Activated CD4-positive, alpha-beta memory T cell treated with anti-CD3 and anti-CD28 coated beads for 36 hours (primary cell): ENCODE measurements at regions of chr2 and their contacts with region 1.

Region 1: DNA sequence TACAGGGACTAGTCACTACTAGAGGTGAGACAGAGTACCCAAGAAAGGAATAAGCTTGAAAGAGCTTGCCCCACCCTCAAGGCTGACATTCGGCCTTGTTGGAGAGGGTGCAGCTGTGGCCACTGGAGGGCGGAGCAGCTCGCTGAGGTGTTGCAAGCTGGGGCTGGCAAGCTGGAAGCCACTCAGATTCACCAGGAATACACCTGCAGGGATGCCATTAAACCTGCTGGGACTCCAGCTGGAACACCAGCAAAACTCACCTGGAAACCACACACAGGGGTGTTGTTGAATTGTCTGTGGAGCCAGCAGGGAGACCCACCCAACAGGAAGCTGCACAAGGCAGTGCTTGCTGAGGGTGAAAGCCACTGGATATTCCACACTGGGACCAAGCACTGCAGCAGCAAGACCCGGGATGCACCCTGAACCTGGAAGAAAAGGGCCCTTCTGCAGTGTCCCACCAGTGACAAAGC is 26.1 kb downstream of the KCTD18 start:
- DNase-seq: peak; percentile 66
- H3K4me3 Mint-ChIP-seq: no peak overlapping the region
- H3K27ac Mint-ChIP-seq: no peak overlapping the region
- H3K4me1 Mint-ChIP-seq: peaks cover 18% of the 10 kb centered on the region
- H3K27me3 Mint-ChIP-seq: no peaks in the 10 kb centered on the region

Region 2: DNA sequence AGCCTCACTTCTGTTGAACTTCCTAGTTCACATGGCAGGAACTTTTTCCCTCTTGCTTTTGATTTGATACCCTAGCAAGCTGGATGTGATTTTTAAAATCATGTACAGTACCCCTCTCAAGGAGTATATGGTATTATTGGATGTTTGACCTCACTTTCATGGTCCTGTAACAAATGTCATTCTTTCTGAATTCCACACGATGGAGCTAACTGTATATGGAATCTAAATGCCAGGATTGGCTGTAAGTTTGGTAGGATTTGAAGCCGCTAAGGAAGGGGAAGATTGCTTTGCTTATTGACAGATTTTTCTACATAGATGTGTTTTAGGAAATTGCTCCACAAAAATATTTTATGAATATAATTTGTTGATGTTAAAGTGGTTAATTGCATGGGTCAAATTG is 510.1 kb before region 1 on chr2:
- CTCF ChIA-PET with region 1: interaction called, 11 read pairs
- POLR2A ChIA-PET with region 1: no interaction called
- intact Hi-C with region 1: no loop called
- DNase-seq: no peak
- H3K4me3 Mint-ChIP-seq: no peak overlapping the region
- H3K27ac Mint-ChIP-seq: no peak overlapping the region
- H3K4me1 Mint-ChIP-seq: peaks cover 15% of the 10 kb centered on the region
- H3K27me3 Mint-ChIP-seq: no peaks in the 10 kb centered on the region

Region 3: GRCh38 chr2:199985625-199986207 is 498.0 kb before region 1 on chr2:
- CTCF ChIA-PET with region 1: interaction called, 49 read pairs
- POLR2A ChIA-PET with region 1: interaction called, 3 read pairs
- intact Hi-C with region 1: loop called (anchors 1 kb)
- DNase-seq: peak; percentile 73
- H3K4me3 Mint-ChIP-seq: no peak overlapping the region
- H3K27ac Mint-ChIP-seq: no peak overlapping the region
- H3K4me1 Mint-ChIP-seq: peaks cover 4% of the 10 kb centered on the region
- H3K27me3 Mint-ChIP-seq: no peaks in the 10 kb centered on the region

Region 4: GRCh38 chr2:200199576-200200263 is 284.0 kb before region 1 on chr2:
- CTCF ChIA-PET with region 1: no interaction called
- POLR2A ChIA-PET with region 1: no interaction called
- intact Hi-C with region 1: loop called (anchors 10 kb)
- DNase-seq: peak; percentile 12
- H3K4me3 Mint-ChIP-seq: no peak overlapping the region
- H3K27ac Mint-ChIP-seq: no peak overlapping the region
- H3K4me1 Mint-ChIP-seq: no peaks in the 10 kb centered on the region
- H3K27me3 Mint-ChIP-seq: peaks cover 4% of the 10 kb centered on the region

Region 5: DNA sequence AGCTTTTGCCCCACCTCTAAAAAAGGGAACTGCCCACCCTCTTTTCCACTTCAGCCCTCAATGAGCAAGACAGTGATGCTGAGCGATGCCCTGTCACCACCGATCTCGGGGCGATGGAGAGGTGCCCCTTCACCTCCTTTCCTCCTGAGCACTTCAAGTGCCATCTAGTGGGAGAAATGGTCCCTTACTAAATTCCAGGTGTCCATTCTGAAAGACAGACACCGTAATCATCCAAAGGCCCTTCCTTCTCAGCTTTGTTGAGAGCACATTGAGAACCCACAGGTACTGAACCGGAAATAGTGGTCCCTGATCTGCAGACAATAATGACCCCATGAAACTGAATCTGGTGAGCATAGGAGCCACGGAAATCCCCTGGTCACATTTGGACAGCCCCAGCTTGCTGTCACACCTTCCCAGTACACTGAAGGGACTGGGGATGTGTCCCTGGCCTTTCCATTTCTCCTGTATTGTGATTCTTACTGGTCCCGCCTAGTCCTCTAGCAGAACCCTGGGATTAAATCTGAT is 12.4 kb before region 1 on chr2:
- CTCF ChIA-PET with region 1: interaction called, 37 read pairs
- POLR2A ChIA-PET with region 1: interaction called, 3 read pairs
- intact Hi-C with region 1: no loop called
- DNase-seq: peak; percentile 63
- H3K4me3 Mint-ChIP-seq: no peak overlapping the region
- H3K27ac Mint-ChIP-seq: no peak overlapping the region
- H3K4me1 Mint-ChIP-seq: peaks cover 35% of the 10 kb centered on the region
- H3K27me3 Mint-ChIP-seq: no peaks in the 10 kb centered on the region

Region 6: GRCh38 chr2:200498402-200499162 is 14.8 kb after region 1 on chr2:
- CTCF ChIA-PET with region 1: interaction called, 25 read pairs
- POLR2A ChIA-PET with region 1: no interaction called
- intact Hi-C with region 1: no loop called
- DNase-seq: no peak
- H3K4me3 Mint-ChIP-seq: no peak overlapping the region
- H3K27ac Mint-ChIP-seq: no peak overlapping the region
- H3K4me1 Mint-ChIP-seq: peaks cover 5% of the 10 kb centered on the region
- H3K27me3 Mint-ChIP-seq: no peaks in the 10 kb centered on the region